ENCODE measurements at regions of chr4 and their contacts with region 1.

Region 1: GRCh38 chr4:43132010-43132582 is 239.6 kb downstream of the GRXCR1 start:
- DNase-seq: peak; percentile 54
- H3K4me3 Mint-ChIP-seq: no peak overlapping the region
- H3K27ac Mint-ChIP-seq: no peak overlapping the region
- H3K4me1 Mint-ChIP-seq: no peaks in the 10 kb centered on the region
- H3K27me3 Mint-ChIP-seq: no peaks in the 10 kb centered on the region
- CTCF ChIP-seq: peak; percentile 34

Region 2: GRCh38 chr4:43089730-43090129 is 42.4 kb before region 1 on chr4:
- CTCF ChIA-PET with region 1: no interaction called
- intact Hi-C with region 1: no loop called
- DNase-seq: no peak
- H3K4me3 Mint-ChIP-seq: no peak overlapping the region
- H3K27ac Mint-ChIP-seq: no peak overlapping the region
- H3K4me1 Mint-ChIP-seq: no peaks in the 10 kb centered on the region
- H3K27me3 Mint-ChIP-seq: no peaks in the 10 kb centered on the region
- CTCF ChIP-seq: no peak

Region 3: GRCh38 chr4:43471950-43472349 is 339.9 kb after region 1 on chr4:
- CTCF ChIA-PET with region 1: no interaction called
- intact Hi-C with region 1: loop called (anchors 5 kb)
- DNase-seq: no peak
- H3K4me3 Mint-ChIP-seq: no peak overlapping the region
- H3K27ac Mint-ChIP-seq: no peak overlapping the region
- H3K4me1 Mint-ChIP-seq: no peaks in the 10 kb centered on the region
- H3K27me3 Mint-ChIP-seq: no peaks in the 10 kb centered on the region
- CTCF ChIP-seq: no peak

Measured in Calu3 (cell line).